MCF 10A (cell line): ENCODE measurements at regions of chr3 and their contacts with region 1.

Region 1: DNA sequence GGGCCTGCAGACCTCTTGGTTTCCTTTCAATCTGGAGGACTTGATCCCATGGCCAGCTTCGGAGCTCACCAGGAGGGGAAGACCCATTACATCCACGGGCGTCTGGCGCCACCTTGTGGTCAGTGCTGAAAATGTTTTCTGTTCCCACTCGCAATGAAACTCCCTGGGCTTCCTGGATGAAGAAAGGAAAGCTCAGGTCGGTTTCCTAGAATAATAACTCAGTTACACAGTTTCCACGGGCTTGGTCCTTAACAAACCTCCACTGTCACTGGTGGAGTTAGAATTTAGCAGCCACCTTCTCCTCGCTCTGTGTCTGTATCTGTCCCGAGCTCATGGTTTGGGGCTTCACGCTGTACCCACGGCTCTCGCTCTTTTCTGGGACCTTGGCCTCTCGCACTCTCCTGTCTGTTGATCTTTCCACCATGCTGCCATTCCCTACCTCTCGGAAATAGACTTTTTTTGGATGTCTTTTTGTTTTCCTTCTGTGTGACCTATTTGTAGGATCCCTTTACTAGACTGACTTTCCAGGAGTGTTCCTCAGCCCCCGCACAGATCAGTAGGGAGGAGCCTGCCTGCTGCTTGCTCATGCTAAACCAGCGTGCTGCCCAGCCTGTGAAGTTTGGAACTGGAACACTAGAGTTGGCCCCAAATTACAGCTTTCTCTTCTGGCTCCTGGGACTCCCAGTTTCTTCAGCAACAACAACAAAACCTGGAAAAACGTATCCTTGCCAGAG is 56.3 kb downstream of the IL20RB start:
- DNase-seq: peak; percentile 90
- H3K4me3 Mint-ChIP-seq: no peak overlapping the region
- H3K27ac Mint-ChIP-seq: peak overlapping the region; percentile 46
- H3K4me1 Mint-ChIP-seq: peaks cover 29% of the 10 kb centered on the region
- H3K27me3 Mint-ChIP-seq: no peaks in the 10 kb centered on the region
- CTCF ChIP-seq: peak; percentile 77

Region 2: GRCh38 chr3:135982922-135983581 is 1031.1 kb before region 1 on chr3:
- CTCF ChIA-PET with region 1: no interaction called
- POLR2A ChIA-PET with region 1: no interaction called
- intact Hi-C with region 1: no loop called
- DNase-seq: peak; percentile 47
- H3K4me3 Mint-ChIP-seq: no peak overlapping the region
- H3K27ac Mint-ChIP-seq: peak overlapping the region; percentile 36
- H3K4me1 Mint-ChIP-seq: peaks cover 21% of the 10 kb centered on the region
- H3K27me3 Mint-ChIP-seq: no peaks in the 10 kb centered on the region
- CTCF ChIP-seq: no peak

Region 3: GRCh38 chr3:136305878-136306277 is 708.2 kb before region 1 on chr3:
- CTCF ChIA-PET with region 1: no interaction called
- POLR2A ChIA-PET with region 1: no interaction called
- intact Hi-C with region 1: loop called (anchors 10 kb)
- DNase-seq: peak; percentile 63
- H3K4me3 Mint-ChIP-seq: no peak overlapping the region
- H3K27ac Mint-ChIP-seq: no peak overlapping the region
- H3K4me1 Mint-ChIP-seq: no peaks in the 10 kb centered on the region
- H3K27me3 Mint-ChIP-seq: no peaks in the 10 kb centered on the region
- CTCF ChIP-seq: peak; percentile 39

Region 4: GRCh38 chr3:136545664-136546268 is 468.4 kb before region 1 on chr3:
- CTCF ChIA-PET with region 1: no interaction called
- POLR2A ChIA-PET with region 1: no interaction called
- intact Hi-C with region 1: loop called (anchors 10 kb)
- DNase-seq: peak; percentile 20
- H3K4me3 Mint-ChIP-seq: no peak overlapping the region
- H3K27ac Mint-ChIP-seq: no peak overlapping the region
- H3K4me1 Mint-ChIP-seq: peaks cover 29% of the 10 kb centered on the region
- H3K27me3 Mint-ChIP-seq: no peaks in the 10 kb centered on the region
- CTCF ChIP-seq: peak; percentile 28

Region 5: DNA sequence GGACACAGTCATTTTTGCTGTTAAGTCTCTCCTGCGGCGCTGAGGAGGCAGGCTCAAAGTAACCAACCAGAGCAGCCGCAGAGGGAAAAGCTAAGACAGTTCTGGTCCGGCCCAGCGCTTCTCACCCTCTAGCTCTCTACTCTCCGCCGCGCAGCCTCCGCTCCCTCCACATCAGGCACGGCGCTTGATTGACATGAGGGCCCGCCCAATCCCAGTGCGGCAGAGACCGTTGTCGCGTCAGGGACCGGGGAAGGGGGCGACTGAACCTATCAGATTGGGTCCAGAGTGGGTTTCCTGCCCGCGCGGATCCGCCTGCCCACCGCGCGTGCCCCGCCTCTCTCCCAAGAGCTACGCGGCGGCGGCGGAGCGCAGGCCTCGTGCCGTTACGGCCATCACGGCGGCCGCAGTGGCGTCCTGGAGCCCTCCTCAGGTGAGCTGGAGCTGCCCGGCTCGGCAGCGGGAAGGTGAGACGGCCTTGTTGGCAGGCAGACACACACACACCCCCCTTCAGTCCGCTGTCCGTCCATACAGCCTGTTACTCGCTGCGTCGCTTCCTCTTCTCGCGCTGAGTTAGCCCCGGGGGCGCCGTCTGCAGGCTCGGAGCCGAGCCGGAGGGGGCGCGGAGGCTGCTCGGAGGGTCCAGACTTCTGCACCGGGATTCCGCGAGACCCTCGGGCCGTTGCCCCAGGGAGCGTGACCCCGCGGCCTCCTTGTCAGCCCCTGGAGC is 152.1 kb before region 1 on chr3 and contains the start of gene NCK1:
- CTCF ChIA-PET with region 1: interaction called, 7 read pairs
- POLR2A ChIA-PET with region 1: interaction called, 13 read pairs
- intact Hi-C with region 1: loop called (anchors 1 kb)
- DNase-seq: peak; percentile 98
- H3K4me3 Mint-ChIP-seq: peak within 1 kb of the TSS; percentile 87
- H3K27ac Mint-ChIP-seq: peak within 1 kb of the TSS; percentile 88
- H3K4me1 Mint-ChIP-seq: peaks cover 17% of the 10 kb centered on the region
- H3K27me3 Mint-ChIP-seq: no peaks in the 10 kb centered on the region
- CTCF ChIP-seq: no peak
- total RNA-seq, gene NCK1: 50.4 and 59.4 TPM in 2 replicates

Region 6: DNA sequence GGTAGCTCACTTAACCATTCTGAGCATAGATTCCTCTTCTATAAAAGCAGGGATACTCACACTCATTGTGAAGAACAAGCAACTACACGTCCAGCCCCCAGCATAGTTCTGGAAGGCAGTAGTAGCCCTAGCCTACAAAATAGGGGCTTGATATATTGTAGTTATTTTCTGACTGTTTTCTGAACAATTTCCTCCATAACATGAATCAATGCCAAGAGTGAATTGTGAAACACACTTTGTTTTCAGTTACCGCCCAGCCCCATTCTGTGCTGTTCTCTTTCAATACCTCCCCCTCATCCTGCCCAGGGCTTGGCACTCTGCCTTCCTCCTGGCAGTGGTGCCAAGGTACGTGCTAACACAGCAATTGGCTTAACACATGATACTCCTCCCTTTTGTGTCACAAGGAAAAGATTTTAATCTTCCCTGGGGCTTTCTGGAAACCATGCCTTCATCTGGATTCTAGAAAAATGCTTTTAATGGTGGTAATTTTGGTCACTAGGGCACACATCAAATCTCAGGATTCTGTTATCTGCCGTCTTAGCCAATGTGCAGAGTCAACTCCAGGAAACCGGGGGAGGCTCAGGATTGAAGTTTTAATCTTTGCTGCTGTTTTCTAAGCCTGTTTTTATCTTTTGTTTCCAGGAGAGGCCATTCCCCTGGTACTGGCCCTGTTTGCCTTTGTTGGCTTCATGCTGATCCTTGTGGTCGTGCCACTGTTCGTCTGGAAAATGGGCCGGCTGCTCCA is 19.2 kb before region 1 on chr3:
- CTCF ChIA-PET with region 1: interaction called, 14 read pairs
- POLR2A ChIA-PET with region 1: interaction called, 23 read pairs
- intact Hi-C with region 1: no loop called
- DNase-seq: peak; percentile 99
- H3K4me3 Mint-ChIP-seq: peak overlapping the region; percentile 42
- H3K27ac Mint-ChIP-seq: peak overlapping the region; percentile 94
- H3K4me1 Mint-ChIP-seq: peaks cover 61% of the 10 kb centered on the region
- H3K27me3 Mint-ChIP-seq: no peaks in the 10 kb centered on the region
- CTCF ChIP-seq: no peak